ENCODE measurements at regions of chr12 and their contacts with region 1.

Region 1: DNA sequence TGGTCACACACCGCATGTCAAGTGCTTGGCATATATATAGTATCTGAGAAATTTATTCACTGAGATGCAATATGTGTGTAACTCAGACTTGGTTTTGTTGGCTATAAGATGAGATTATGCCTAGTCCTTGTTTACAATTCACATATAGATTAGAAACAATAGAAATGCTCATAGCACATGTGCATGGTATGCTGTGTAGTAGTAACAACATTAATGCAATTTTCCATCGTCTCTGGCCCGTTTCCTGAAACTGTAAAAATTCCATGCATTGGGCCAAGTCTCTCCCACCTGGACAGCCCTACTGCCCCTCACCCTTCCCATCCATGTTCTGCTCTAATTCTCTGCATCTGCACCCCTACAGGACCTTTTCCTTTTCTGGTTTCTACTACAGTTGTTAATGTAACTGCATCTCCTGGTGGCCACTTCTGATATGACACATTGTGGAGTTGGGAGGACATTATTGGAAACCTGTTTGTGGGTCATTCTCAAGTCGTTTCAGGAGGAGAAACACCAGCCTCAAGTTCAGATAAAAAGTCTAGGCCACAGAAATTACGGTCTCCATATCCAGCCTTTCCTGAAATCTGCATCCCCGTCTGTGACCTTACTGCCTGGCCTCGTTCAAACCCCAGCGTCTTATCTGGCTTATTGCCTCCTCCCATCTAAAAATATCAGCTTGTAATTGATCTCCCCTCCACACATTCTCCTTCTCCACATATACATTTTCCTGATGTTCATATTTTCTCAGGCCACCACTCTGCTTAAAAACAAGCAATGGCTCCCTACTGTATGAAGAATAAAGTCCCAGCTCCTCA is 37.5 kb downstream of the EMP1 start:
- DNase-seq: peak; percentile 77
- H3K4me3 ChIP-seq: no peak overlapping the region
- H3K27ac ChIP-seq: no peak overlapping the region
- H3K4me1 ChIP-seq: no peaks in the 10 kb centered on the region
- H3K27me3 ChIP-seq: no peaks in the 10 kb centered on the region

Region 2: GRCh38 chr12:13023811-13024530 is 210.1 kb before region 1 on chr12:
- in situ Hi-C with region 1: loop called (anchors 10 kb)
- DNase-seq: peak; percentile 90
- H3K4me3 ChIP-seq: peak overlapping the region; percentile 39
- H3K27ac ChIP-seq: 0 out of 2 replicates have a peak overlapping the region, but pooled peaks have one; percentile 6
- H3K4me1 ChIP-seq: peaks cover 13% of the 10 kb centered on the region
- H3K27me3 ChIP-seq: no peaks in the 10 kb centered on the region

Region 3: GRCh38 chr12:13764748-13765147 is 530.7 kb after region 1 on chr12:
- in situ Hi-C with region 1: no loop called
- DNase-seq: no peak
- H3K4me3 ChIP-seq: no peak overlapping the region
- H3K27ac ChIP-seq: no peak overlapping the region
- H3K4me1 ChIP-seq: no peaks in the 10 kb centered on the region
- H3K27me3 ChIP-seq: peaks cover 13% of the 10 kb centered on the region; the same call in 1 of the 2 replicates